ENCODE measurements at regions of chr3 and their contacts with region 1.

Region 1: DNA sequence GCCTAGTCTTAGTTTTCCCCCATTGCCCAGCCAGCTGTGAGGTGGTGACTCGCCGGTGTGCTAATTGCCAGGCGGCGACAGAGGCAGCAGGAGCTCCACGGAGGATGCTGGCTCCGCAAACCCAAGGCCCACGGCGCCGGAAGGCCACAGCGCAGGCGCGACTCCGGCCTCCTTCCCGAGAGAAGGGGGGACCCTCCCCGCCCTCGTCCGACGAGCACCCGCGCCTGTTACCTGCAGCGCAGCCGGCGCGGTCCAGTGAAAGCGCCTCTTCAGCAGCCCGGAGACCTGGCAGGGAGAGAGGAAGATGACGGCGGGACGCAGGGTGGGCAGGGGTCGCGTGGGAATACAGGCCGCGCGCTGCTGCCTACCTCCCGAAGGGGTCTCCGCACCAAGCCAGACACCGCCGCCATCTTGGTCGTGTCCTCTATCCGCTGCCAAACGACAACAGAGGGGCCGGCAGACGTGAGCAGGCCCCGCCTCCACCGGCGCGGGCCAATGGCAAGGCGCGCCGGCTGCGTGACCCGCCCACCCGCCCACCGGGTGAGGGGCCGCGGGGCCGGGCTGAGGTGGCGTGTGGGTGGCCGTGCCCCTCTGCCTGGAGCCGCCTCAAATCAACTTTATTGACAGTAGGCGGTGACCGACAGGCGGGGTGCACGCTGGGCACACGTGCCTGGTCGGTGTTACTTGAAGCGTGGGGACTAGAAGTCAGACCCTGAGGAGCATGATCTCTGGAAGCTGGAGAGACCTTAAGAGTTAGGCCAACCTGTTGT is at the start of gene PDHB:
- DNase-seq: peak; percentile 86 to 91 (median 89)
- H3K4me3 ChIP-seq: peak within 1 kb of the TSS; percentile 69 to 82
- H3K4me3 Mint-ChIP-seq: peak within 1 kb of the TSS; percentile 91 to 94 (median 92)
- H3K27ac ChIP-seq: peak within 1 kb of the TSS; percentile 77
- H3K27ac Mint-ChIP-seq: peak within 1 kb of the TSS; percentile 88 to 98 (median 91)
- H3K4me1 ChIP-seq: peaks cover 25% of the 10 kb centered on the region
- H3K4me1 Mint-ChIP-seq: peaks cover 16 to 36% (median 25%) of the 10 kb centered on the region in 4 donors
- H3K27me3 ChIP-seq: no peaks in the 10 kb centered on the region
- H3K27me3 Mint-ChIP-seq: no peaks in the 10 kb centered on the region
- total RNA-seq, gene PDHB: 55.0 to 58.6 TPM

Region 2: GRCh38 chr3:58332575-58333188 is 100.9 kb before region 1 on chr3 and contains the start of gene PXK:
- CTCF ChIA-PET with region 1: interaction called, 4 read pairs
- POLR2A ChIA-PET with region 1: interaction called, 9 read pairs
- intact Hi-C with region 1: loop called (anchors 1 kb)
- DNase-seq: peak; percentile 75 to 84 (median 81)
- H3K4me3 ChIP-seq: peak within 1 kb of the TSS; percentile 46 to 57
- H3K4me3 Mint-ChIP-seq: peak within 1 kb of the TSS; percentile 96 to 100 (median 100)
- H3K27ac ChIP-seq: peak within 1 kb of the TSS; percentile 56
- H3K27ac Mint-ChIP-seq: peak within 1 kb of the TSS; percentile 85 to 98 (median 95)
- H3K4me1 ChIP-seq: peaks cover 30% of the 10 kb centered on the region
- H3K4me1 Mint-ChIP-seq: peaks cover 23 to 48% (median 33%) of the 10 kb centered on the region in 4 donors
- H3K27me3 ChIP-seq: no peaks in the 10 kb centered on the region
- H3K27me3 Mint-ChIP-seq: no peaks in the 10 kb centered on the region
- total RNA-seq, gene PXK: 20.0 to 20.2 TPM

Region 3: GRCh38 chr3:58471025-58471887 is 37.7 kb after region 1 on chr3:
- CTCF ChIA-PET with region 1: no interaction called
- POLR2A ChIA-PET with region 1: interaction called, 11 read pairs
- intact Hi-C with region 1: no loop called
- DNase-seq: peak; percentile 27 to 60 (median 37)
- H3K4me3 ChIP-seq: peak overlapping the region in 1 of 2 donors; percentile 9
- H3K4me3 Mint-ChIP-seq: peak overlapping the region in 7 of 8 donors; percentile 29 to 61 (median 49)
- H3K27ac ChIP-seq: peak overlapping the region; percentile 24
- H3K27ac Mint-ChIP-seq: peak overlapping the region; percentile 13 to 89 (median 79)
- H3K4me1 ChIP-seq: peaks cover 20% of the 10 kb centered on the region
- H3K4me1 Mint-ChIP-seq: peaks cover 18 to 41% (median 29%) of the 10 kb centered on the region in 4 donors
- H3K27me3 ChIP-seq: no peaks in the 10 kb centered on the region
- H3K27me3 Mint-ChIP-seq: no peaks in the 10 kb centered on the region

Measured in CD4-positive, alpha-beta memory T cell (primary cell).